CD8-positive, alpha-beta T cell (primary cell): ENCODE measurements at regions of chr7 and their contacts with region 1.

Region 1: DNA sequence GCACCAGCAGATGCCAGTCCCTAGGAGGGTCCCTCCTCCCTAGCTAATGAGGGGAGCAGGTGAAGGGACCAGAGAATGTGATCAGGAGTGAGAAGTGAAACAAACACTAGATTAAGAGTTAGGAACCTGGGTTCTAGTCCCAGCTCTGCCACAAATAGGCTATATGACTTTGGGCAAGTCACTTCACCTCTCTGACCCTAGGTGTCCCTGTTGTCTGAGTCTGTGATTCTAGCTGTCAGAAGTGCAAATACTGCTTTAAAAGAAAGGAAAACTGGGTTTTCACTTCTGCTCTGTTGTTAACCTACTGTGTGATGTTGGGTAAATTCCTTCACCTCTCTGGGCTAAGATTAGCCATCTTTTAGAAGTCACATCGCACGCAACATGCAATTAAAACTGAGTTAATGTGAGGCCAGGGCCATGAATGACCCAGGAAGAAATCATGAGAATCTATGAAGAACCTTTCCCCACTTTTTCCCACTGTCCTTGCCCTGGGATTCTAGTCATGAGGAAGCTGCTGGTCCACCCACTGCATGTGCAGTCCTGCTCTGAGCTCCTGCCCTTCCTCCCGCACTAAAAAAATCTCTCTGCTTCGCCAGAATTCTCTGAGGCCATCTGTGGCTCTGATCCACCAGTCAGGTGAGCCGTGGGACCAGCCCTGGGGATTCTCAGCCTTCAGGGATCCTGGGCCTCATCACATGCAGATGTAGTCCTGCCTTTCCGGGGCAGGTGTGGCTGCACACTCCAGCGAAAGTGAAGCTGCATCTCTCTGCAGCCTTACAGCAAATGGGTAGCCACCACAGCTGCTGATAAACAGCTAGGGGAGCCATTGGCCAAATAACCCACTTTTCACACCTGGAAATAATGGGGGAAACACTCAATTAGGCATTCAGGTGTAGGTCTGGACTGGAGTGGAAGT is 181.7 kb downstream of the PLXNA4 start:
- DNase-seq: peak in 7 of 9 experiments; percentile 4 to 75 (median 39)
- ATAC-seq: peak; percentile 56
- H3K4me3 ChIP-seq: no peak overlapping the region
- H3K4me3 Mint-ChIP-seq: no peak overlapping the region
- H3K27ac ChIP-seq: no peak overlapping the region
- H3K27ac Mint-ChIP-seq: no peak overlapping the region
- H3K4me1 ChIP-seq: no peaks in the 10 kb centered on the region
- H3K4me1 Mint-ChIP-seq: peaks cover 4% of the 10 kb centered on the region
- H3K27me3 ChIP-seq: no peaks in the 10 kb centered on the region
- H3K27me3 Mint-ChIP-seq: no peaks in the 10 kb centered on the region
- CTCF ChIP-seq: peak; percentile 71

Region 2: DNA sequence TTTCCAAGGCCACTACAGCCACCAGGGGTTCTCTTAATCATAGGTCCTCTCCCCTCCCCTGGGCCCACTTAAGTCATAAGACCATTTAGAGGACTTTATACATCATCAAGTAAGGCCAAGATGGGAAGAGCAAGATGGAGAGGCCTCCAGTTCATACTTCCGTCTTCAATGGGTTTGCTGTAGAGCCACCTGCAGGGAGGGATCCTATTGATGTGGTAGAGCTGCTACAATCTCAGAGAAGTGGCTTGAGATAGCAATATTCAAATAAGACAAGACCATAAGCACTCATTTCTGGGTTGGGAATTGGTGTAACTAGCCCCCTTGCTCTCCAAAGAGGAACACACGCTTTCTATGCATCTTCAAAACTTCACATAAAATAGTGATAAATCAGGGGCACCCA is 32.5 kb before region 1 on chr7:
- CTCF ChIA-PET with region 1: no interaction called
- POLR2A ChIA-PET with region 1: no interaction called
- intact Hi-C with region 1: loop called in 1 of 2 experiments (anchors 1 kb)
- DNase-seq: no peak
- ATAC-seq: no peak
- H3K4me3 ChIP-seq: no peak overlapping the region
- H3K4me3 Mint-ChIP-seq: no peak overlapping the region
- H3K27ac ChIP-seq: no peak overlapping the region
- H3K27ac Mint-ChIP-seq: no peak overlapping the region
- H3K4me1 ChIP-seq: no peaks in the 10 kb centered on the region
- H3K4me1 Mint-ChIP-seq: peaks cover 3% of the 10 kb centered on the region
- H3K27me3 ChIP-seq: peaks cover 0 to 2% of the 10 kb centered on the region in 2 experiments
- H3K27me3 Mint-ChIP-seq: peaks cover 14% of the 10 kb centered on the region
- CTCF ChIP-seq: no peak

Region 3: DNA sequence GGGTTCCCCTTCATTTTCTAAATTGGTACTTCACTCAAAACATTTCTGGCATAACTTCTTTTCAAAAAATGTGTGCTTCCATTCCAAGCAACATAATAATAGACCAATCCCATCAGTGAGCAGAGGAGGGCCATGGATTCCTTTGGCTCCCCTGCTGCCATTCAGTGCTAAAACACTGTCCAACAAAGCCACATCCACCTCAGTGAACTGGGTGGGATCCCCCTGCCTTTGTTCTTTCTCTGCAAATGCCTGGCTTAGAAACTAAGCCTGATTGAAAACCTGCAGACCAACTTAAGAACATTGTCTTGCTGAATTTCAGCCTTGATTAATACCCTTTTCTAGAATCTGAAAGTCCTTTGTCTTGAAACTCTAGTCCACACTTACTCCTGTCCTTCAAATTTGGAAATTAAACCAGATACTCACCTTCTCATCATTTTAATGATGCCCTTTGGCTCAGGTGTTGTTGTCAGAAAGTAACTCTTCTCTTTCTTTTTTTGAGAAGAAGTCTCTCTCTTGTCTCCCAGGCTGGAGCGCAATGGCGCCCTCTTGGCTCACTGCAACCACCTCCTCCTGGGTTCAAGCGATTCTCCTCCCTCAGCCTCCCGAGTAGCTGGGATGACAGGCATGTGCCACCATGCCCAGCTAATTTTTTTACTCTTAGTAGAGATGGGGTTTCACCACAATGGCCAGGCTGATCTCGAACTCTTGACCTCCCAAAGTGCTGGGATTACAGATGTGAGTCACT is 49.4 kb after region 1 on chr7:
- CTCF ChIA-PET with region 1: interaction called, 10 read pairs
- POLR2A ChIA-PET with region 1: no interaction called
- intact Hi-C with region 1: no loop called
- DNase-seq: peak in 1 of 9 experiments; percentile 42
- ATAC-seq: no peak
- H3K4me3 ChIP-seq: no peak overlapping the region
- H3K4me3 Mint-ChIP-seq: no peak overlapping the region
- H3K27ac ChIP-seq: no peak overlapping the region
- H3K27ac Mint-ChIP-seq: no peak overlapping the region
- H3K4me1 ChIP-seq: peaks cover 24% of the 10 kb centered on the region
- H3K4me1 Mint-ChIP-seq: peaks cover 44% of the 10 kb centered on the region
- H3K27me3 ChIP-seq: no peaks in the 10 kb centered on the region
- H3K27me3 Mint-ChIP-seq: no peaks in the 10 kb centered on the region
- CTCF ChIP-seq: no peak

Region 4: DNA sequence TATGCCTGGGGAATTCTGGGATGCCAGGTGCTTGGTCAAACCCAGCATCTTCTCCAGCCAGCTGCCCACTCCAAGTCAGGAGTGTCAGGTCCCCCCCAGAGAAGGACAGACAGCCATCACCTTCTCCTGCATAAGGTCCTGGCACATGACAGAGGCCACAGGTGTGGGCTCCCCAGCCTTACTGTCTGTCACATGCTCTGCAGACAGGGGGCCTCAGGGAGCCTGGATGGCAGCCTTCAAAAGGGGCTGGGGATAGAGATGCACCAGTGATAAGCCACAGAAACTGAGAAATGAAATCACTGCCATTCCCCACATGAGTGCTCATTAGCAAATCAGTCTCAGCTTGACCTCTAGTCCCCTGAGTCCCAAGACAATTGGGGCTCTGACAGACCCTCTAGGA is 108.9 kb after region 1 on chr7:
- CTCF ChIA-PET with region 1: no interaction called
- POLR2A ChIA-PET with region 1: no interaction called
- intact Hi-C with region 1: no loop called
- DNase-seq: no peak
- ATAC-seq: no peak
- H3K4me3 ChIP-seq: no peak overlapping the region
- H3K4me3 Mint-ChIP-seq: no peak overlapping the region
- H3K27ac ChIP-seq: no peak overlapping the region
- H3K27ac Mint-ChIP-seq: no peak overlapping the region
- H3K4me1 ChIP-seq: no peaks in the 10 kb centered on the region
- H3K4me1 Mint-ChIP-seq: no peaks in the 10 kb centered on the region
- H3K27me3 ChIP-seq: no peaks in the 10 kb centered on the region
- H3K27me3 Mint-ChIP-seq: no peaks in the 10 kb centered on the region
- CTCF ChIP-seq: no peak

Region 5: GRCh38 chr7:132557489-132558044 is 163.0 kb after region 1 on chr7:
- CTCF ChIA-PET with region 1: interaction called, 11 read pairs
- POLR2A ChIA-PET with region 1: interaction called, 3 read pairs
- intact Hi-C with region 1: no loop called
- DNase-seq: peak in 1 of 9 experiments; percentile 10
- ATAC-seq: no peak
- H3K4me3 ChIP-seq: no peak overlapping the region
- H3K4me3 Mint-ChIP-seq: no peak overlapping the region
- H3K27ac ChIP-seq: no peak overlapping the region
- H3K27ac Mint-ChIP-seq: no peak overlapping the region
- H3K4me1 ChIP-seq: peaks cover 5% of the 10 kb centered on the region
- H3K4me1 Mint-ChIP-seq: peaks cover 4% of the 10 kb centered on the region
- H3K27me3 ChIP-seq: peaks cover 0 to 14% of the 10 kb centered on the region in 2 experiments
- H3K27me3 Mint-ChIP-seq: no peaks in the 10 kb centered on the region
- CTCF ChIP-seq: no peak

Region 6: DNA sequence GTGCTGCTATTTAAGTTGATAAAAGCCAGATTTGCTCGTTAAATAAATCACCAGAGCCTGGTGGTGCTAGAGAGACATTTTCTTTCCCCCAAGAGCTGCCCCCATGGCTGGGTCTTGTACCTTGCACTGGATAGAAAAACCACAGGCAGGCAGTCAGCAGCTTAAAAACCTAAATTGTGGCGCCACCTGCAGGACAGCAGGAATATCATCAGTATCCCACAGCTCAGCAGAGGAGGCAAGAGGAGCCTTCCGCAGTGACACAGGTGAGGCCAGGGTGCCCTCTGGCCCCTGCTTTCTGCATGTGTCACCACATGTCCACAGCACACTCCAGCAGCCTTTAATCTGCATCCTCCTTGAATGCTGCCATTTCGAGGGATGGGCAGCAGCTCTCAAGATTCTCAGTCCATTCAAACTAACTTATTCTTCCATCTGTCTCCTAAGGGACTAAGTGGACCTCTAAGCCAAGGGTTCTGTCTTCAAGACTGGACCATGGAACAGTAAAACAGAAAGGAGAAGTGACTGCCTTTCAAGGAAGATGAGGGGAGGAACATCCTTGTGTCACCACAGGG is 186.3 kb after region 1 on chr7:
- CTCF ChIA-PET with region 1: interaction called, 247 read pairs
- POLR2A ChIA-PET with region 1: interaction called, 7 read pairs
- intact Hi-C with region 1: loop called (anchors 1 kb)
- DNase-seq: peak; percentile 39 to 87 (median 65)
- ATAC-seq: peak; percentile 82
- H3K4me3 ChIP-seq: no peak overlapping the region
- H3K4me3 Mint-ChIP-seq: no peak overlapping the region
- H3K27ac ChIP-seq: no peak overlapping the region
- H3K27ac Mint-ChIP-seq: no peak overlapping the region
- H3K4me1 ChIP-seq: peaks cover 11% of the 10 kb centered on the region
- H3K4me1 Mint-ChIP-seq: peaks cover 10% of the 10 kb centered on the region
- H3K27me3 ChIP-seq: peaks cover 3 to 6% of the 10 kb centered on the region in 2 experiments
- H3K27me3 Mint-ChIP-seq: peaks cover 27% of the 10 kb centered on the region
- CTCF ChIP-seq: peak; percentile 87

Region 7: GRCh38 chr7:132646052-132646451 is 251.5 kb after region 1 on chr7:
- CTCF ChIA-PET with region 1: no interaction called
- POLR2A ChIA-PET with region 1: no interaction called
- intact Hi-C with region 1: no loop called
- DNase-seq: no peak
- ATAC-seq: no peak
- H3K4me3 ChIP-seq: no peak overlapping the region
- H3K4me3 Mint-ChIP-seq: no peak overlapping the region
- H3K27ac ChIP-seq: no peak overlapping the region
- H3K27ac Mint-ChIP-seq: no peak overlapping the region
- H3K4me1 ChIP-seq: no peaks in the 10 kb centered on the region
- H3K4me1 Mint-ChIP-seq: no peaks in the 10 kb centered on the region
- H3K27me3 ChIP-seq: peaks cover 0 to 11% of the 10 kb centered on the region in 2 experiments
- H3K27me3 Mint-ChIP-seq: no peaks in the 10 kb centered on the region
- CTCF ChIP-seq: no peak

Region 8: DNA sequence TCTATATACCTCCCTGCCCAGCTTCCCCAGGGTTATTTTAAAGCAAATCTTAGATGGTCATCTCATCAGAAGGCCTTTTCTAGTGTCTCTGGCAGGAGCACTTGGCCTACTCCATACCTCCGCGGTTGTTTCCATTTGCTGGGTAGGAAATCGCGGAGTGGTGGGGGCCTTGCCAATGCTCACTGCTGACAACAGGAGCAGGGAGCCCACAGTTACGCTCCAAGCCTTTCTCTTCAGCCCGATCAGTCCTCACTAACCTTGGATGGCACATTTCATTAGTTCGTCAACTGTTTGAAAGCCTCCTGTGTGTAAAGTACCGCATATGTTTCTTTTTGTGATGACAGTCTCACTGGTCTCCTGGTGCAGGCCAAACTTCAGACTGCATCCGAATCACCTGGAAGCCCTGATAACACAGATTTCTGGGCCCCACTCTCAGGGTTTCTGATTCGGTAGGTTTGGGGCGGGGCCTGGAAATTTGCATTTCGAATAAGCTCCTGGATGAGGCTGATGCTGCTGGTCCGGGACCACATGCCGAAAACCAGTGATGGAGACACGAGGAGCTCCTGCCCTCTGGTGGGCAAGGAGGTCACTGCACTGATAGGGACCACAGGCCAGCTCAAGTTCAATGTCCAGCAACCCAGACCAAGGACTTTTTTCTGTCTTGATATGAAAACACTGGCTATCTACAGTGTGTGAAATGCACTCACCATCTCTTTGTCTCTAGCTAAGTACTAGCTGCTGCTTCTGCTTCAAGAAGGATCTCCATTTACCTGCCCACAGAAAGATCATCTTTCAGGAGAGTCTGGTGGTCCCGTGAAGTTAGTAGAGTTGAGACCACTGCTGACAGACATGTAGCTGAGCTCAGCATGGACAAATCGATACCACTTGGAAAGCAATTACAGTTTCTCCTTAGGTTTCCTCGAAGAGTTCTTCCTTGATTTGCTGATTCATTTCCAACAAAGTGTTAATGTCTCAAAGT is 1746.6 kb after region 1 on chr7:
- CTCF ChIA-PET with region 1: no interaction called
- POLR2A ChIA-PET with region 1: no interaction called
- intact Hi-C with region 1: loop called in 1 of 2 experiments (anchors 2 kb)
- DNase-seq: peak; percentile 6 to 57 (median 42)
- ATAC-seq: peak; percentile 69
- H3K4me3 ChIP-seq: no peak overlapping the region
- H3K4me3 Mint-ChIP-seq: no peak overlapping the region
- H3K27ac ChIP-seq: no peak overlapping the region
- H3K27ac Mint-ChIP-seq: no peak overlapping the region
- H3K4me1 ChIP-seq: no peaks in the 10 kb centered on the region
- H3K4me1 Mint-ChIP-seq: peaks cover 6% of the 10 kb centered on the region
- H3K27me3 ChIP-seq: no peaks in the 10 kb centered on the region
- H3K27me3 Mint-ChIP-seq: no peaks in the 10 kb centered on the region
- CTCF ChIP-seq: peak; percentile 68